ENCODE measurements at regions of chr5 and their contacts with region 1.

Region 1: GRCh38 chr5:139137702-139138101 is 60.5 kb downstream of the SIL1 start:
- DNase-seq: peak; percentile 52
- H3K4me3 ChIP-seq: no peak overlapping the region
- H3K27ac ChIP-seq: no peak overlapping the region
- H3K4me1 ChIP-seq: peaks cover 20% of the 10 kb centered on the region
- H3K27me3 ChIP-seq: no peaks in the 10 kb centered on the region
- CTCF ChIP-seq: peak in 1 of 2 donors; percentile 32

Region 2: GRCh38 chr5:139075066-139076050 is 62.3 kb before region 1 on chr5:
- CTCF ChIA-PET with region 1: no interaction called
- dilution Hi-C with region 1: loop called (anchors 10 kb)
- in situ Hi-C with region 1: no loop called
- intact Hi-C with region 1: no loop called
- DNase-seq: no peak
- H3K4me3 ChIP-seq: no peak overlapping the region
- H3K27ac ChIP-seq: no peak overlapping the region
- H3K4me1 ChIP-seq: no peaks in the 10 kb centered on the region
- H3K27me3 ChIP-seq: no peaks in the 10 kb centered on the region
- CTCF ChIP-seq: no peak

Region 3: GRCh38 chr5:139343476-139343875 is 205.8 kb after region 1 on chr5:
- CTCF ChIA-PET with region 1: no interaction called
- dilution Hi-C with region 1: no loop called
- in situ Hi-C with region 1: no loop called
- intact Hi-C with region 1: no loop called
- DNase-seq: no peak
- H3K4me3 ChIP-seq: peak overlapping the region; percentile 31 to 86 (median 85)
- H3K27ac ChIP-seq: no peak overlapping the region
- H3K4me1 ChIP-seq: peaks cover 19% of the 10 kb centered on the region
- H3K27me3 ChIP-seq: no peaks in the 10 kb centered on the region
- CTCF ChIP-seq: no peak